A549 (cell line): ENCODE measurements at regions of chr6 and their contacts with region 1.

Region 1: DNA sequence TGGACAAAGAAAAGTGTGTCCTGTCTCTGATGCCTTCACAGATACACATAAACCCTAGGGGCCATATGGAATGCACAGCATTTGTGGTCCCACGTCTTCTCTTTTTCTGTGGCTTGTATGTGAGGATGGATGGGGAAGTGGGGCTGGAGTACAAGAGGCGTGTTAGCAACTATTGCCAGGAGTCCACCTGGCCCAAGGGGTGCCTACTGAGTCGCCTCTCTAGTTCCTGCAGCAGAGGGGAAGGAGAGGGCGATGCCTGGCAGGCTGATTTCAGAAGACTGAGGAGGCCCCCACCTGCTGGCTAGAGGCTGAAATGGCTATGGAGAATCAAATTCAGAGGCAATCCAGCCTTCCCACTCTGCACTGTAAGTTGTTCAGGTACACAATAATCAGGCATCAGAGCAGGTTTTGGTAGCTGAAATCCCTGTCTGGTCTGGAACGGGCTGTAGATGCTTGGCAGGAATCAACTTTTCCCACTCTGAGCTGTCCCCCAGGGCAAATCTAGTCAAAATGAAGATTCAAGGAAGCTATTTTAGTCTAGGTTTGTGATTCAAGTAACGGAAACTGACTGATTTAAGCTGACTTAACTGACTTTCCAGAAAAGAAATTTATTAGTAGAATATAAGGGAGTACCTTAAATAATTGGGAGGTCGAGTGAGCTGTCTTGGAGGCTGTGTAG is 14.9 kb upstream of the PPARD start:
- DNase-seq: peak; percentile 55 to 63
- ATAC-seq: peak; percentile 97 to 99
- H3K4me3 ChIP-seq: no peak overlapping the region
- H3K27ac ChIP-seq: no peak overlapping the region
- H3K4me1 ChIP-seq: no peaks in the 10 kb centered on the region
- CTCF ChIP-seq: peak; percentile 28; the same call in 2 of the 3 replicates
- EP300 ChIP-seq: no peak
- POLR2A ChIP-seq: no peak
- RAD21 ChIP-seq: peak; percentile 29 to 41; a peak in 3 of 5 replicates

Region 2: DNA sequence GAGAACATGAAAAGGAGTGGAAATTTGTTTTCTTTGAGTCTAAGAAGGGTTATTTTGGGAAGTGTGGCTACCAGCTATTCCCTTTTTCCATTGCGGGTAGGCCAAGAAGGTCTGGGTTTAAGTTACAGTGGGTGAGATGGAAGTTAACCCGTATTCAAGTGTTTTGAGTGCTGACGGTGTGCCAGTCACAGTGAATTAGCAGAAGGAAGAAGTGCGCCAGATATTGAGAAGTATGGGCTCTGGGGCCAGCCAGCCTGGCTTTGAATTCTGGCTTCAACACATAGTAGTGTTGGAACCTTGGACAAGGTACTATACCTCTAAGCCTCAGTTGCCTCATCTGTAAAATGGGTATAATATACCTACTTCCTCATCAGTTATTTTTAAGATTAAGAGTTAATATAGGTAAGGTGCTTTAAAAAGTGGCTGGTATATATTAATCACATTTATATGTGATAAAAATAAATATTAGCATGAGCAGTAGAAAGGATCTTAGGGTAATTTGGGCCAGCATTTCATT is 51.7 kb before region 1 on chr6:
- CTCF ChIA-PET with region 1: no interaction called
- POLR2A ChIA-PET with region 1: no interaction called
- DNase-seq: no peak
- ATAC-seq: no peak
- H3K4me3 ChIP-seq: no peak overlapping the region
- H3K27ac ChIP-seq: no peak overlapping the region
- H3K4me1 ChIP-seq: no peaks in the 10 kb centered on the region
- CTCF ChIP-seq: no peak
- EP300 ChIP-seq: no peak
- POLR2A ChIP-seq: no peak
- RAD21 ChIP-seq: no peak

Region 3: GRCh38 chr6:35294308-35294945 is 33.1 kb before region 1 on chr6:
- CTCF ChIA-PET with region 1: interaction called, 12 read pairs
- POLR2A ChIA-PET with region 1: no interaction called
- DNase-seq: peak; percentile 45 to 65
- ATAC-seq: peak; percentile 81 to 88
- H3K4me3 ChIP-seq: no peak overlapping the region
- H3K27ac ChIP-seq: no peak overlapping the region
- H3K4me1 ChIP-seq: no peaks in the 10 kb centered on the region
- CTCF ChIP-seq: peak; percentile 59
- EP300 ChIP-seq: no peak
- POLR2A ChIP-seq: no peak
- RAD21 ChIP-seq: peak; percentile 64 to 71